ENCODE measurements at regions of chr1 and their contacts with region 1.

Region 1: GRCh38 chr1:200971955-200972711 is 51.4 kb downstream of the KIF21B start:
- DNase-seq: peak; percentile 56
- H3K4me3 ChIP-seq: no peak overlapping the region
- H3K27ac ChIP-seq: no peak overlapping the region
- H3K4me1 ChIP-seq: peaks cover 14% of the 10 kb centered on the region
- H3K27me3 ChIP-seq: peaks cover 6% of the 10 kb centered on the region
- CTCF ChIP-seq: peak; percentile 96

Region 2: GRCh38 chr1:200588698-200589097 is 383.4 kb before region 1 on chr1:
- intact Hi-C with region 1: no loop called
- DNase-seq: no peak
- H3K4me3 ChIP-seq: no peak overlapping the region
- H3K27ac ChIP-seq: no peak overlapping the region
- H3K4me1 ChIP-seq: no peaks in the 10 kb centered on the region
- H3K27me3 ChIP-seq: no peaks in the 10 kb centered on the region
- CTCF ChIP-seq: no peak

Region 3: DNA sequence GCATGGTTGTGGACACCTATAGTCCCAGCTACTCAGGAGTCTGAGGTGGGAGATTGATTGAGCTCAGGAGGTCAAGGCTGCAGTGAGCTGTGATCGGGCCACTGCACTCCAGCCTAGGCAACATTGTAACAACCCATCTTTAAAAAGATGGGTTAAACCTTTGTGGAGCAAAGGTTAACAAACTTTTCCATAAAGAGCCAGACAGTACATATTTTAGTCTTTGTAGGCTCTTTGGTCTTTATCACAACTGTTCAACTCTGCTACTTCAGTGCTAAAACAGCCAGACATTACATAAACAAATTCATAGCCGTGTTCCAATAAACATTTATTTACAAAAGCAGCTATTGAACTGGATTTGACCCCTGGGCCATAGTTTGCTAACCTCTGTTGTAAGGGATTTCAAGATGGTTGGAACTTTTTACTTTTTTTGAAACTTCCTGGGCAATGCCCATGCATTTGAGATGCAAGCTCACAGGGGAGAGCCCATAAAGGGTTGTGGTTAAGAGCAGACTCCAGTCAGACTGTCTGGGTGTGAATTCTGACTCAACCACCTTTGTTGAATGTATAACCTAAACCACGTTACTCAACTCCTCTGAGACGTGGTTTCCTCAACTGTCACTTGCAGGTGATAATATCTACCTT is 66.6 kb before region 1 on chr1:
- intact Hi-C with region 1: no loop called
- DNase-seq: no peak
- H3K4me3 ChIP-seq: no peak overlapping the region
- H3K27ac ChIP-seq: no peak overlapping the region
- H3K4me1 ChIP-seq: no peaks in the 10 kb centered on the region
- H3K27me3 ChIP-seq: peaks cover 27% of the 10 kb centered on the region
- CTCF ChIP-seq: no peak

Region 4: GRCh38 chr1:201104141-201104540 is 132.0 kb after region 1 on chr1:
- intact Hi-C with region 1: no loop called
- DNase-seq: no peak
- H3K4me3 ChIP-seq: no peak overlapping the region
- H3K27ac ChIP-seq: no peak overlapping the region
- H3K4me1 ChIP-seq: no peaks in the 10 kb centered on the region
- H3K27me3 ChIP-seq: peaks cover 30% of the 10 kb centered on the region
- CTCF ChIP-seq: no peak

Region 5: GRCh38 chr1:201114236-201115131 is 142.4 kb after region 1 on chr1:
- intact Hi-C with region 1: loop called (anchors 10 kb)
- DNase-seq: peak; percentile 85
- H3K4me3 ChIP-seq: peak overlapping the region; percentile 74
- H3K27ac ChIP-seq: no peak overlapping the region
- H3K4me1 ChIP-seq: peaks cover 13% of the 10 kb centered on the region
- H3K27me3 ChIP-seq: peaks cover 74% of the 10 kb centered on the region
- CTCF ChIP-seq: peak; percentile 87